ENCODE measurements at regions of chr18 and their contacts with region 1.

Region 1: DNA sequence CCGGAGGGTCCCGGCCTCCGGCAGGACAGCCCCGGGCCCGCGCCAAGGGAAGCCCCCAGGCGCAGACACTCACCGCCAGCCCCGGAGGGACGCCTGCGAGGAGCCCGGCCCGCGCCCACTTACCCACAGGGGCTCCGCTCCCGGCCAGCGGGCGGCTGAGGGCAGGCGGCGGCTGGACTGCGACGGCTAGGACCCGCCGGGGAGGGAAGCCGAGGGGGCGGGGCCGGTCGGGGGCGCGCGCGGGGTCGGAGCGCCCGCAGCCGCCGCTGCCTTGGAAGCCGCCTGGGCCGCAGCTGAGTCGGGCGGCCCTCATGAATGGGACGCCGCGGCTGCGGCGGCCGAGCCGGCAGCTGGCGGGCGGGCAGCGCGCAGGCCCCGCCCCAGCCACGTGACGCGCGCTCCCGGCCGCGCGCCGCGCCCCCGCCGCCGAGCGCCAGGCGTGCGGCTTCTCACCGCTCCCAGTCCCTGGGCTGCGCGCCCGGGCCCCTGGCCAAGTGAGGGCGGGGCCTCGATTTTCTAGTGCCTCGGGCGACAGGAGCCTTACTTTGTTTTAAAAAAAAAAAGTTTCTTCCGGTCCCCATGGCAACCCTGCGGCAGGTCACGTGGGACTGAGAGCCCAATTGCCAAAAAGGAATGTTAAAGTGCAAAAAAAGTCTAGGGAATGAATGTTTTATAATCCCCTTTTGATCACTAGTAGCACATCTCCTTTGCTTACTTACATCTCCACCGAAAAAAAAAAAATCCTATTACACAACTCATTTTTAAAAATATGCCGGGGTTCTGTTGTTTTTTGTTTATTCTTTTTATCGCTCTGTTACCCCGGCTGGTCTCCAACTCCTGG is at the start of gene LPIN2:
- DNase-seq: peak; percentile 88 to 100
- H3K4me3 ChIP-seq: peak within 1 kb of the TSS; percentile 77
- H3K27ac ChIP-seq: peak within 1 kb of the TSS; percentile 99
- H3K4me1 ChIP-seq: peaks cover 49% of the 10 kb centered on the region
- H3K27me3 ChIP-seq: no peaks in the 10 kb centered on the region
- CTCF ChIP-seq: no peak
- total RNA-seq, gene LPIN2: 13.3 and 15.0 TPM in 2 replicates

Region 2: GRCh38 chr18:3037423-3037915 is 24.3 kb after region 1 on chr18:
- CTCF ChIA-PET with region 1: interaction called, 3 read pairs
- POLR2A ChIA-PET with region 1: no interaction called
- intact Hi-C with region 1: loop called (anchors 1 kb)
- DNase-seq: peak; percentile 65 to 95
- H3K4me3 ChIP-seq: no peak overlapping the region
- H3K27ac ChIP-seq: peak overlapping the region; percentile 91
- H3K4me1 ChIP-seq: peaks cover 22% of the 10 kb centered on the region
- H3K27me3 ChIP-seq: no peaks in the 10 kb centered on the region
- CTCF ChIP-seq: no peak

Region 3: GRCh38 chr18:3051718-3052410 is 38.7 kb after region 1 on chr18:
- CTCF ChIA-PET with region 1: interaction called, 4 read pairs
- POLR2A ChIA-PET with region 1: no interaction called
- intact Hi-C with region 1: loop called (anchors 5 kb)
- DNase-seq: peak; percentile 49 to 92
- H3K4me3 ChIP-seq: peak overlapping the region; percentile 30; the same call in 1 of the 2 replicates
- H3K27ac ChIP-seq: peak overlapping the region; percentile 90
- H3K4me1 ChIP-seq: peaks cover 45% of the 10 kb centered on the region
- H3K27me3 ChIP-seq: no peaks in the 10 kb centered on the region
- CTCF ChIP-seq: no peak

Region 4: GRCh38 chr18:3119401-3120335 is 106.5 kb after region 1 on chr18:
- CTCF ChIA-PET with region 1: no interaction called
- POLR2A ChIA-PET with region 1: no interaction called
- intact Hi-C with region 1: loop called (anchors 2 kb)
- DNase-seq: peak; percentile 52 to 98
- H3K4me3 ChIP-seq: no peak overlapping the region
- H3K27ac ChIP-seq: peak overlapping the region; percentile 82
- H3K4me1 ChIP-seq: peaks cover 68% of the 10 kb centered on the region
- H3K27me3 ChIP-seq: no peaks in the 10 kb centered on the region
- CTCF ChIP-seq: no peak

Region 5: DNA sequence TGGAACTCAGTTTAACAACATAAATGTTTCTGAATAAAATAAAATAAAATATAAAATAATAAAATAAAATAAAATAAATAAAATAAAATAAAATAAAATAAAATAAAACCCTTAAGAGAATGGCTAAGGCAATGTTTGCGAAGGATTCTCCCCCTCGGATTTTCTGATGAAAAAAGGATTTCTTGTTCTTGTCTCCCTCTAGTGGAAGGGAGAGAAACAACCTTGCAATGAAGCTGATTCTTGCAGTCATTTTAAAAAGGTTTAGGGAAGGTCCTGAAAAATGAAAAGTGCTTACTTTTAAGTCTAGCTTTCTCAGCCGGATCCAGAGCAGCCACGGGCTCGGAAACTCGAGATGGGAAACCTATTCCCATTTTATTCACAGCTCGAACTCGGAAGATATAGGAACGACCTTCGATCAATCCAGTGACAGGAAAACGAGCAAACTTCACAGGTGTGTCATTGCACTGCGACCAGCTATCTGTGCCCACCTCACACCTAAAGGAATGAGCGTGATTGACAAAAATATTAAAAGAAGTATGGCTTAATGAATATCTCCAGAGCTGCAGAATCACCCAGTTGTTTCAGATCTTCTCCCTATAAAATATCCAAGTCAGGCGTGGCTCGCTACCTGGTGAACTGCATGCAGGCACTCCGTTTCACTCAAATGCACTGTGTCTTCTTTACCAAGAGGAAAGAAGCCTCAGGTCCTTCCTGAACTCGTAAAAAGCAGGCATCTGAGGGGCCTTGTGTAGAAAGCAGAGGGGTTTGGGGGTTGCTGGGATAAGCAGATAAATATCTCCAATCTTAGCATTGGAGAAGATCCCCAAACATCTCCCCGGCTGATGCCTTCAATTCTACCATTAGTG is 138.4 kb after region 1 on chr18:
- CTCF ChIA-PET with region 1: no interaction called
- POLR2A ChIA-PET with region 1: interaction called, 5 read pairs
- intact Hi-C with region 1: loop called (anchors 5 kb)
- DNase-seq: no peak
- H3K4me3 ChIP-seq: no peak overlapping the region
- H3K27ac ChIP-seq: no peak overlapping the region
- H3K4me1 ChIP-seq: peaks cover 9% of the 10 kb centered on the region; the same call in 1 of the 2 replicates
- H3K27me3 ChIP-seq: no peaks in the 10 kb centered on the region
- CTCF ChIP-seq: peak; percentile 91

Region 6: DNA sequence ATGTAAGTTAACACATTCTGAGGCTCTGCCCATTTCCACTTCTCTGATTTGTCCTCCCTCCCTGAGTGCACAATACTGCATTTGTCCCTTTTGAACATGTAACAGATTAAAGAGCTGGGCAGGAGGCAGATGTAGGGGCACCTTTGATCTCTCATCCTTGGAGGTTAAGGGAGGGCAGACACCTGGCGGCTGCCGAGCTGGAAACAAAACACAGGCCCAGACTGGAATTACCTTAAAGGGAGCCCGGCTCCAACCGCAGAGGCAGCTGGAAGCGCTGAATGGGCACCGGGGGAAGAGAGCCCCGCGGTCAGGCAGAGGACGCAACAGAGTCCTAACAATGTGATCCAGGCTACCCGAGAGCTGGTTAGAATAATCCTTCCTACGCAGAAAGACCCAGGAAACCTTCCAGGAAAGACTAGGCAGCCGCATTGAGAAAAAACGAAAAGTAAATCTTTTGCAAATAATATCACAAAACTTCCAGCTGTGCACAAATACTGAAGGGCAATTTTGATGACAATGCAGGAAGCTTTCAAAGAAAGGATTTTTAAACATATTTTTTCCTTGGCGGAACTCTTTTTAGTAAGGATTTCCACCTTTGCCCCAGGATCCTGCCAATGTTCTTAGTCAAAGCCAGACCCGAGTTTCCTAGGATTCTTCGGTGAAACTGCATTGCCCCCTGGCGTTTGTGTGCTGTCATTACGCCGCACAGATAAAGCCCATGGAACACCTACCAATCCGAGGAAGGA is 652.8 kb after region 1 on chr18:
- CTCF ChIA-PET with region 1: no interaction called
- POLR2A ChIA-PET with region 1: no interaction called
- intact Hi-C with region 1: no loop called
- DNase-seq: peak; percentile 78 to 89
- H3K4me3 ChIP-seq: peak overlapping the region; percentile 45; the same call in 1 of the 2 replicates
- H3K27ac ChIP-seq: peak overlapping the region; percentile 96
- H3K4me1 ChIP-seq: peaks cover 33% of the 10 kb centered on the region
- H3K27me3 ChIP-seq: no peaks in the 10 kb centered on the region
- CTCF ChIP-seq: peak; percentile 97

Measured in PC-9 (cell line).